GM10248 (cell line): ENCODE measurements at regions of chr4 and their contacts with region 1.

Region 1: DNA sequence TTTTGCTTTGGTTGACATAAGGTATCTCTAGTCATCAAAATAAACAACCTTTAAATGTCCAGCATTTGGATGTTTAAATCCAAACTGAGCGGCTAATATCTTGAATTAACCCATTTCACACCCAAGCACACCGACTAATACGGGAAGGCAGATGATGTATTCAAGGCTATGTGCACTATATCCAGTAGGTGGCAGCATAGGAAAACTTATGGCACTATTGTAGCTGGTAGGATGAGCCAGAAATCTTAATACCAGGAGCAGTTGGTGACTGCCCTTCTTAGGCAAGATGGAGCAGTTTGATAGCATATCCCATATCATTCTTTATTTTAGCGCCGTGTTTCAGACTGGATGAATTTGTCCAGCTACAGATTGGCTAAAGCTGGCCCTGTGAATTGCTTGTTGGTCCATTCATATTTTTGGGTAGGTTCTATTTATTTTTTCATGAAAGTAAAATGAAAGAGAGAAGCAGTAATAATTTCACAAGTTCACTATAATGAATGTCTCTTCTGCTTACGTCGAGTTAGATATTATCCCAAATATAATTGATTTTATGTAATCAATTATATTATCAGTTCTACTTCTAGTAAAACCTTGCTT is 24.4 kb downstream of the UCHL1 start:
- DNase-seq: peak; percentile 77
- CTCF ChIP-seq: peak; percentile 77

Region 2: DNA sequence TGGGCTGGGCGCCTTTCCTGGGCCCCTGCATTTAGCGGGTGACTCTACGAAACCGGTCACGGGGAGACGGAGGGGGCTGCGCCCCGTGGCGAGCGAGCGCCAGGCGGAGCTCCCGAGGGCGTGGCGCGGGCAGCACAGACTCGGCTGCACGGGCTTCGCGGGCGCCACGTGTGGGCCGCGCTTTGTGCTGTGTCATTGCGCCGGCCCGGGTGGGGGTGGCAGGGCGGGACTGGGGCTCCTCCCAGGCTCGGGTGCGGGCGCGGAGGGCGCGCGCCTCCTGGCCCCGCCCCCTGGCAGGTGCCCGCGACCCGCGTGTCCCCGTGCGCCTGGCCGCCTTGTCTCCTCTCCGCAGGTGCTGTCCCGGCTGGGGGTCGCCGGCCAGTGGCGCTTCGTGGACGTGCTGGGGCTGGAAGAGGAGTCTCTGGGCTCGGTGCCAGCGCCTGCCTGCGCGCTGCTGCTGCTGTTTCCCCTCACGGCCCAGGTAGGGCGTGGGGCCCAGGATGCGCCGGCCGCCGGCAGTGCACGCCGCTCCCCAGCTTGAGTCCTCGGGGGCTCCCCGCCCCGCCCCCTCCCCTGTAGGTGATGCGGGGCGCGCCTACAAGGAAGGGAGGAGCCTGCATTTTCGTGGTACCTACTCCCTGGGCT is 23.8 kb before region 1 on chr4:
- CTCF ChIA-PET with region 1: interaction called, 35 read pairs
- POLR2A ChIA-PET with region 1: no interaction called
- DNase-seq: peak; percentile 20
- CTCF ChIP-seq: no peak

Region 3: DNA sequence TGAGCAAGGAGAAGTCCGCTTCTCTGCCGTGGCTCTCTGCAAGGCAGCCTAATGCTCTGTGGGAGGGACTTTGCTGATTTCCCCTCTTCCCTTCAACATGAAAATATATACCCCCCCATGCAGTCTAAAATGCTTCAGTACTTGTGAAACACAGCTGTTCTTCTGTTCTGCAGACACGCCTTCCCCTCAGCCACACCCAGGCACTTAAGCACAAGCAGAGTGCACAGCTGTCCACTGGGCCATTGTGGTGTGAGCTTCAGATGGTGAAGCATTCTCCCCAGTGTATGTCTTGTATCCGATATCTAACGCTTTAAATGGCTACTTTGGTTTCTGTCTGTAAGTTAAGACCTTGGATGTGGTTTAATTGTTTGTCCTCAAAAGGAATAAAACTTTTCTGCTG is 13.1 kb before region 1 on chr4:
- CTCF ChIA-PET with region 1: interaction called, 12 read pairs
- POLR2A ChIA-PET with region 1: no interaction called
- DNase-seq: no peak
- CTCF ChIP-seq: no peak

Region 4: DNA sequence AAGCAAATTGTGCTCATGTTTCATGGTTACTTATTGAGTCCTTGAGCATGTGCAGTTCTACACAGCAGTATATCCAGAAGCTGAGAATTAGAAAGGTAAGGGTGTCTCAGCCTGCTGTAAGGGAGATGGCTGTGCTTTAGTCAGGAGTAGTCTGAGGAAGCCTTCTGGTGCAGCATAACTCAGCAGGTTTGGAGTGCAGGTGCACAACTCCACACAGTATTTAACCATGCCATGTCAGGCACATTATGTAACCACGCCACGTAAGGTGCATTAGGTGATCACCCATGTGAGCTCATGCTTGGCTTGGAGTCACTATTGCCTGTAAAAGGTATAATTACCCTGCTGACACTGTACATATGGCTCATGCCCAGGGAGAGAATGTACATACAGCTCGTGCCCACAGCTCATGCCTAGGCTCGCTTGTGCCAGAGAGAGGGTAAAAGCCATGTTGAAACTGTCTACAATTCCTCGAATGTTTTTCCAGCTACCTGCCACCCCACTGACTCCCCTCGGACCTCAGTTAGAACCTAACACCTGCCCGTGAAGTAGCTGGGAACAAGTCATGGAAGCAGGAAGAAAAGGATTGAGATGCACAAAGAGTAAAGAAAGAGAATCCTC is 13.4 kb after region 1 on chr4:
- CTCF ChIA-PET with region 1: interaction called, 19 read pairs
- POLR2A ChIA-PET with region 1: no interaction called
- DNase-seq: no peak
- CTCF ChIP-seq: no peak

Region 5: DNA sequence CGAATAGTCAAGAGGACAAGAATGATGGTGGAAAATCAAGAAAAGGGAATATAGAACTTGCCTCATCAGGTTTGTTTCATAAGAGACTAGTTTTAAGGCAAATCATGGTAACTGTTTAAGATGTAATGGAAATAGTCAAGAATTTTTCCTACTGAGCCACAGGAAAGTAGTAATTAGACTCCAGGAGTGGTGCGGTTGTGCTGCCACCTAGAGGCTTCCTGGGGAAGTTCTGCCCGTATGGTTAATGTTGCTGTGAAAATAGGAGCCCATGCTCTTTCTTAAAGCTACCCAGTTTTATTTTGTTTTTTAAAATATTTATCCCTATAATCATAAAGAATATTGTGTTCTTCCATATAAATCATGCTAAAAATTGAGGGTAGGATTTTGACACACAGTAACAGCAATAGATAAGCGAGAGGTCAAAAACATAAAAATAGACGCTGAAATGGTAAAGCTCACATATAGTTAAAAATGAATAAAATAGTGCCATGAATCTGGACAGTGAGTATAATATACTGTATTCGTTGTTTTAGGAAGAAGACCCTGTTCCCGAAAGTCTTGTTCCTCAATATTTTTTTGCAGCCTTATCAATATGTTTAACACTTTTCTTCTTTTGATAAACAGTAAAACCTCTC is 380.4 kb after region 1 on chr4:
- CTCF ChIA-PET with region 1: interaction called, 82 read pairs
- POLR2A ChIA-PET with region 1: no interaction called
- DNase-seq: peak; percentile 39
- CTCF ChIP-seq: peak; percentile 83

Region 6: GRCh38 chr4:41882625-41883347 is 601.6 kb after region 1 on chr4:
- CTCF ChIA-PET with region 1: interaction called, 59 read pairs
- POLR2A ChIA-PET with region 1: no interaction called
- DNase-seq: peak; percentile 82
- CTCF ChIP-seq: peak; percentile 90